HepG2 (cell line): ENCODE measurements at regions of chr5 and their contacts with region 1.

Region 1: GRCh38 chr5:150589871-150590601 is 50.4 kb upstream of the SYNPO start:
- DNase-seq: peak; percentile 69
- ATAC-seq: peak; percentile 97
- H3K4me3 ChIP-seq: peak overlapping the region in 1 of 3 experiments; percentile 22; a peak in 1 of 6 replicates
- H3K27ac ChIP-seq: no peak overlapping the region
- H3K4me1 ChIP-seq: peaks cover 39% of the 10 kb centered on the region
- H3K27me3 ChIP-seq: peaks cover 0 to 26% of the 10 kb centered on the region in 2 experiments; a peak in 3 of 5 replicates
- CTCF ChIP-seq: peak; percentile 83
- EP300 ChIP-seq: no peak
- POLR2A ChIP-seq: no peak
- RAD21 ChIP-seq: peak; percentile 84

Region 2: DNA sequence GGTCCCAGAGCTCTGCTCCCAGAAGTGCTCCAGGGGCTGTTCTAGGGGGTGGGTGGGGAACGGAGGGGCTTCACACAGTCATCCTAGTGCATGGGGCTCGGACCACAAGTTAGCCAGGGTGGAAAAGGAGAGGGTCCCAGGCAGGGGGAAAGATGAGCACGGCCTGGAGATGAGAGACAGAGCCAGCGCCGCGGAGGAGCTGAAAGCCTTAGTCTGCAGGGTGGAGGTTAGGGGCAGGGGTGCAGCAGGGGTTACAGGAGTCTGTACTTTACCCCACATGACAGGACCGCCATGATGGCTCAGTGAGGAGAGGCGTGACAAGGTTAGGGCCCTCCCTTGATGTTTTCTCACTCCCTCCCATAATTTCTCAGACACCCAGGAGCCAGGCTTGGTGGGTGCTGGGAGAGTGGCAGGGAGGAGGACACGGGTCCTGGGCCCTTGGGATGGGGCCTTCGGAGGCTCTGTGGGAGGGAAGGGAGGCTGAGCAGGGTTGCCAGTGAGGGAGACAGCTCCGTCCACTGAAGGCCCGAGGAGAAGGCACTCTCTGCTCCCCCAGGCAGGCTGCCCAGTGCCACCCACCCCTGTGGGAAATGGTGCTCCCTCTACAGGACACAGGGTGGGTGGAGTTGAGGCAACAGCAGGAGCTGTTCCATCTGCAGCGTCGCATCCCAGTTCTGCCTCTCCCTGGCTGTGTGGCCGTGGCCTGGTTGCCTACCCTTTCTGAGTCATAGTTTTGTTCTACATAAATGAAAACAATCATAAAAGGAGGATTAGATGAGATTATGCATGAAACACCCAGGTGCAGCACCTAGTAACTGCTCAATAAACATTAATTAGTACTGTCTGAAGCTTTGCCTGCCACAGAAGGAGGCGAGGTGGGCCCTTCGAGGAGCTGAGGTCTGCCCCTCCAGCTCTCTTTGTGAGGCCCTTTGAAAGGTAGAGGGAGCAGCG is 15.9 kb before region 1 on chr5:
- CTCF ChIA-PET with region 1: no interaction called
- POLR2A ChIA-PET with region 1: interaction called, 4 read pairs
- in situ Hi-C with region 1: no loop called
- intact Hi-C with region 1: loop called (anchors 2 kb)
- DNase-seq: peak; percentile 25
- ATAC-seq: peak; percentile 80
- H3K4me3 ChIP-seq: peak overlapping the region in 1 of 3 experiments; percentile 24; a peak in 1 of 6 replicates
- H3K27ac ChIP-seq: no peak overlapping the region
- H3K4me1 ChIP-seq: peaks cover 49% of the 10 kb centered on the region
- H3K27me3 ChIP-seq: no peaks in the 10 kb centered on the region
- CTCF ChIP-seq: peak; percentile 71
- EP300 ChIP-seq: no peak
- POLR2A ChIP-seq: no peak
- RAD21 ChIP-seq: 0 out of 2 replicates have a peak, but pooled peaks have one; percentile 9

Region 3: GRCh38 chr5:150645077-150645700 is 55.2 kb after region 1 on chr5:
- CTCF ChIA-PET with region 1: no interaction called
- POLR2A ChIA-PET with region 1: no interaction called
- in situ Hi-C with region 1: no loop called
- intact Hi-C with region 1: no loop called
- DNase-seq: no peak
- ATAC-seq: no peak
- H3K4me3 ChIP-seq: no peak overlapping the region
- H3K27ac ChIP-seq: no peak overlapping the region
- H3K4me1 ChIP-seq: peaks cover 51% of the 10 kb centered on the region
- H3K27me3 ChIP-seq: 0 out of 5 replicates have a peak, but pooled peaks cover 0 to 3% of the 10 kb centered on the region in 2 experiments
- CTCF ChIP-seq: no peak
- EP300 ChIP-seq: no peak
- POLR2A ChIP-seq: no peak
- RAD21 ChIP-seq: no peak

Region 4: DNA sequence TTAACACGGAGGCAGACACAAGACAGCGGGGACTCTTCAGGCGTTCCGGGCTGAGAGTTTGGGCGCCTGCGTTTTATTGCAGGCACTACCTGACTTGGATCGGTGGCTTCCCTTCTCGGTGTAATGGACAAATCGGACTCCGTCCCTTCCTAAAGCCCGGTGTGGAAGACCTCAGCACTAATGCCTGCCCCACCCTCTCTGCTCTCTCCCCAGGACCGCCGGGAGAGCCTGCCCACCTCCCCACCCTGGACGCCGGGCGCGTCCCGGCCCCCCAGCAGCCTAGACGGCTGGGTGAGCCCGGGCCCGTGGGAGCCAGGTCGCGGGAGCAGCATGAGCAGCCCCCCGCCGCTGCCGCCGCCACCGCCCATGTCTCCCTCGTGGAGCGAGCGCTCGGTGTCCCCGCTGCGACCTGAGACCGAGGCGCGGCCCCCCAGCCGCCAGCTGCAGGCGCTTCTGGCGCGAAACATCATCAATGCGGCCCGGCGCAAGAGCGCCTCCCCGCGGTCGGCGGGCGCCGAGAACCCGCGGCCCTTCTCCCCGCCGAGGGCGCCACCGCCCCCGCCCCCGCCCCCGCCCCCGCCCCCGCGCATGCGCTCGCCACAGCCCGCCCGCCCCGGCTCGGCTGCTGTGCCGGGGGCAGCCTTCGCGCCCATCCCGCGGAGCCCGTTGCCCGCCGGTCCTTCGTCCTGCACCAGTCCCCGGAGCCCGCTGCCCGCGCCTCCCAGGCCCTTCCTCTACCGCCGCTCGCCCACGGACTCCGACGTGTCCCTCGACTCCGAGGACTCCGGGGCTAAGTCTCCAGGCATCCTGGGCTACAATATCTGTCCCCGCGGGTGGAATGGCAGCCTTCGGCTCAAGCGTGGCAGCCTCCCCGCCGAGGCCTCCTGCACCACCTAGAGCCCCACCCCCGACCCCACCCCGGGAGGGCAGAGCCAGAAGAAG is 66.4 kb after region 1 on chr5:
- CTCF ChIA-PET with region 1: interaction called, 8 read pairs
- POLR2A ChIA-PET with region 1: no interaction called
- in situ Hi-C with region 1: no loop called
- intact Hi-C with region 1: loop called (anchors 5 kb)
- DNase-seq: peak; percentile 35
- ATAC-seq: peak; percentile 61
- H3K4me3 ChIP-seq: peak overlapping the region; percentile 49 to 75 (median 60)
- H3K27ac ChIP-seq: no peak overlapping the region
- H3K4me1 ChIP-seq: peaks cover 18% of the 10 kb centered on the region
- H3K27me3 ChIP-seq: peaks cover 2 to 21% of the 10 kb centered on the region in 2 experiments; a peak in 2 of 5 replicates
- CTCF ChIP-seq: peak; percentile 78
- EP300 ChIP-seq: no peak
- POLR2A ChIP-seq: no peak
- RAD21 ChIP-seq: peak; percentile 87